Adrenal gland (tissue), 19 donors: ENCODE measurements at regions of chr11 and their contacts with region 1.

Region 1: DNA sequence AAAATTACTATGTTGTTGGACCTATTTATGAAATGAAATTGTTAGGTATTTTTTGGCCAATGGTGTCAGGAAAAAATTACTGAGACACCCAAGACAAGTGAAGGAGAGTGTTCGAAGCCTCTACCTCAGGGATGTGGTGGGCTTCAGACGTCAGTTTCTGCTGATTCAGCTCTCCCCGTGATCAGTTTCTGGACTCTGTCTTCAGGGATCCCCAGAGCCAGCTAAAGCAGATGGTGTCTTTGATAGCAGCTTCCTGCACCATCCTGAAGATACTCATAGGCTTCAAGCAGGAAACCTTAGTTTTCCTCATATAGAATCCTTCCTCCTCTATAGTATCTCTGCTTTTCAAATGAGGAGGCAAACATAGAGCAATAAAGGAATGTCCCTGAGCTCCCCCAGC is 7.4 kb downstream of the CD248 start:
- DNase-seq: no peak
- H3K4me3 ChIP-seq: no peak overlapping the region
- H3K27ac ChIP-seq: no peak overlapping the region
- H3K4me1 ChIP-seq: peaks cover 6 to 7% of the 10 kb centered on the region in 2 donors
- H3K27me3 ChIP-seq: no peaks in the 10 kb centered on the region
- CTCF ChIP-seq: no peak
- POLR2A ChIP-seq: no peak

Region 2: DNA sequence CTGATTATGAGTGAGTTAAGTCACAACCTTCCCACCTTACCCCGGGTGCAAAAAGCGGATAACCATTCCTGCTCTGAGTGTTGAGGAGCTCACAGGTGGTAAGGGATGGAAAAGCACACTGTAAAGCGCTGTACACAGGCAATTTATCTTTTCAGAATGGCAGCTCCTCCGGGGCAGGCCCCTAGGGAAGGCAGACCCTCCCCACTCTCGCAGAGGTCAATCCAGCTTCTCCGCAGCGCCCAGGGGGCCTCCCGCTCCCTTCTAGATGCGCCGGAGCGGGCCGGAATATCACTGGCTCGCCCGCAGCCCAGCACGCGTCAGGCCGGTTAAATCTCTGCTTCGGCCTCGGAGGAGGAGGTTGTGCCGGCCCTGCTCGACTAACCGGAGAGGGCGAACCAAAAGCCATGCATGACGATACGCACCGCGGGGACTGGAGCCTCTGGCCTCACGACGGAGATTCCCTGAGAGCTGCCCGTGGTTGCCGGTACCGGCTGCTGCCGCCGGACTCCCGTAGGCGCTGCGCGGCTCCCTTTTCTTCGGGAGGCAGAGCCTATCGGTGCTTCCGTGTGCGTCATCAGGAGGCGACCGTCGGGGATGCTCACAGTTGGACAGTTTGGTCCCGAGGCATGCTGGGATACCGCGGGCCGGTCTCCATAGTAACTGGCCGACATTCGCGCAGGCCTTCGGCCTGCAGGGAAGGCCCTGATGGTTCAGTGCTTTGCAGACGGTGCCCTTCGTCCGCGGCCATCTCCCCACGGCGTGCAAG is 35.3 kb after region 1 on chr11 and contains the start of gene BRMS1:
- intact Hi-C with region 1: loop called in 1 of 2 experiments (anchors 5 kb)
- DNase-seq: peak; percentile 97 to 100 (median 99)
- H3K4me3 ChIP-seq: peak within 1 kb of the TSS; percentile 50 to 74 (median 55)
- H3K27ac ChIP-seq: peak within 1 kb of the TSS in 4 of 5 donors; percentile 53 to 86 (median 69)
- H3K4me1 ChIP-seq: peaks cover 28 to 32% of the 10 kb centered on the region in 2 donors
- H3K27me3 ChIP-seq: no peaks in the 10 kb centered on the region
- CTCF ChIP-seq: peak in 3 of 6 experiments; percentile 24 to 50 (median 46)
- POLR2A ChIP-seq: peak; percentile 67 to 88
- total RNA-seq, gene BRMS1: 22.4 to 52.4 (median 41.6) TPM

Region 3: GRCh38 chr11:66659763-66660162 is 350.3 kb after region 1 on chr11:
- intact Hi-C with region 1: no loop called
- DNase-seq: no peak
- H3K4me3 ChIP-seq: no peak overlapping the region
- H3K27ac ChIP-seq: no peak overlapping the region
- H3K4me1 ChIP-seq: no peaks in the 10 kb centered on the region
- H3K27me3 ChIP-seq: no peaks in the 10 kb centered on the region
- CTCF ChIP-seq: no peak
- POLR2A ChIP-seq: no peak

Region 4: GRCh38 chr11:66996609-66997405 is 687.3 kb after region 1 on chr11:
- intact Hi-C with region 1: no loop called
- DNase-seq: no peak
- H3K4me3 ChIP-seq: no peak overlapping the region
- H3K27ac ChIP-seq: no peak overlapping the region
- H3K4me1 ChIP-seq: no peaks in the 10 kb centered on the region
- H3K27me3 ChIP-seq: no peaks in the 10 kb centered on the region
- CTCF ChIP-seq: no peak
- POLR2A ChIP-seq: no peak